Activated CD4-positive, alpha-beta T cell treated with anti-CD3 and anti-CD28 coated beads for 36 hours (primary cell): ENCODE measurements at regions of chr19 and their contacts with region 1.

Region 1: DNA sequence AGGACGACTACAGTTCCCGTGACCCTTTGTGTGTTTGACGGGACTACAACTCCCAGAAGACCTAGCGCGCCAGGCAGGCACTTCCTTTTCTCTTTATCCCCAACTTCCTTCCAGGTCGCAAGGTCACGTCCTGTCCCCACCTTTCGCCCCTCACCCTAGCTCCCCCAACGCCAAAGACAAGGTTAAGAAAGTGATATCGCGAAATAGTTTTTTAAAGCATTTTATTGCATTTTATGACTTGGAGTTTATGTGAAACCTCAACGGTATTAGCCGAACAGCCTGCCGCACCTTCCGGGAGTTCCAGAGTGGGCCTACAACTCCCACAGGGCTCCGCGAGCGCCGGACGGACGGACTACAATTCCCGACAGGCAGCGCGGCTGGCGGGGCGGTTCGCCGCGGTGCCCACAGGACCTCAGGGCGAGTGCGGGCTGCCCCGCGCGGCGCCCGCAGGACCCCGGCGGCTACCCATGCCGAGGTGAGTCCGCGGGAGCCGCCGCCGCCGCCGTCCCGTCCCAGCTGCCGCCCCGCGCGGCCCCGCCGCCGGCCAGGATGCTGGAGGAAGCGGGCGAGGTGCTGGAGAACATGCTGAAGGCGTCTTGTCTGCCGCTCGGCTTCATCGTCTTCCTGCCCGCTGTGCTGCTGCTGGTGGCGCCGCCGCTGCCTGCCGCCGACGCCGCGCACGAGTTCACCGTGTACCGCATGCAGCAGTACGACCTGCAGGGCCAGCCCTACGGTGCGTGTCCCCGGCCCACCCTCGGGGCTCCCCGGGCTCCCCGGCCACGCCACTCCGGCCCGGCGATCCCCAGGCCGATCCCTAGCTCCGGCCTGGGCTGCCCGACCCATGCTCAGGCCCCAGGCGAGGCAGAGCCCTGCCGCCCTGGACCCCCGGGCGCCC is at the start of gene NCLN:
- DNase-seq: peak; percentile 97
- ATAC-seq: peak; percentile 86
- H3K4me3 Mint-ChIP-seq: peak within 1 kb of the TSS; percentile 83
- H3K27ac Mint-ChIP-seq: peak within 1 kb of the TSS; percentile 94
- H3K4me1 Mint-ChIP-seq: peaks cover 56% of the 10 kb centered on the region
- H3K27me3 Mint-ChIP-seq: no peaks in the 10 kb centered on the region
- total RNA-seq, gene NCLN: 55.6 to 58.2 TPM

Region 2: GRCh38 chr19:2820112-2820702 is 365.5 kb before region 1 on chr19:
- CTCF ChIA-PET with region 1: no interaction called
- POLR2A ChIA-PET with region 1: no interaction called
- intact Hi-C with region 1: loop called in 1 of 2 experiments (anchors 1 kb)
- DNase-seq: peak; percentile 31
- ATAC-seq: no peak
- H3K4me3 Mint-ChIP-seq: peak overlapping the region; percentile 78
- H3K27ac Mint-ChIP-seq: peak overlapping the region; percentile 31
- H3K4me1 Mint-ChIP-seq: peaks cover 12% of the 10 kb centered on the region
- H3K27me3 Mint-ChIP-seq: no peaks in the 10 kb centered on the region

Region 3: DNA sequence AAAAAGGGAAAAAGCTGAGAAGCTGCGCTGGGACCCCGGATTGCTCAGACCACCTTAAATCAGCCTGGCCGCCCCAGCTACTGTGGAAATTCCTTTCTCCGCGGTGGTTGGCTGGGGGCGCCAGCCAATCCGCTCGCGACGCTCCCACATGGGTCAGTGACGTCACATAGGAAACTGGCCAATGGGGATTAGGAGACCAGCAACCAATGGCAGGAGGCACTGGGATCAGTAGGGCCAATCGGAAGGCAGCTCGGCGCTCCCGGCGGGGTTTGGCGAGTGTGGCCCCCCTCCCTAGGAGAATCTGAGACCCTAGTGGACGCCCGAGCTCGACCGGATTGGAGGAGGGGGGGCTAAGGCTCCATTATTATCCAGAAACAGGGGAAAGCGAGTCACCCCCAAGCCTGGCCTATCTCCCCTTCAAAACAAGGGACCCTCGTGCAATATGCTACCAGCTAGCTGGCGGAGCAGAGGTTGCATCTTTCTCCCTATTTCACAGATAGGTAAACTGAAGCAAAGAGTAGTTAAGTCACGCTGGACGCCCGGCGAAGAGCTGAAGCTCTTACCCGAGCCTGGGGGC is 150.1 kb before region 1 on chr19:
- CTCF ChIA-PET with region 1: no interaction called
- POLR2A ChIA-PET with region 1: no interaction called
- intact Hi-C with region 1: loop called in 1 of 2 experiments (anchors 1 kb)
- DNase-seq: peak; percentile 97
- ATAC-seq: peak; percentile 94
- H3K4me3 Mint-ChIP-seq: peak overlapping the region; percentile 83
- H3K27ac Mint-ChIP-seq: peak overlapping the region; percentile 96
- H3K4me1 Mint-ChIP-seq: peaks cover 19% of the 10 kb centered on the region
- H3K27me3 Mint-ChIP-seq: no peaks in the 10 kb centered on the region

Region 4: DNA sequence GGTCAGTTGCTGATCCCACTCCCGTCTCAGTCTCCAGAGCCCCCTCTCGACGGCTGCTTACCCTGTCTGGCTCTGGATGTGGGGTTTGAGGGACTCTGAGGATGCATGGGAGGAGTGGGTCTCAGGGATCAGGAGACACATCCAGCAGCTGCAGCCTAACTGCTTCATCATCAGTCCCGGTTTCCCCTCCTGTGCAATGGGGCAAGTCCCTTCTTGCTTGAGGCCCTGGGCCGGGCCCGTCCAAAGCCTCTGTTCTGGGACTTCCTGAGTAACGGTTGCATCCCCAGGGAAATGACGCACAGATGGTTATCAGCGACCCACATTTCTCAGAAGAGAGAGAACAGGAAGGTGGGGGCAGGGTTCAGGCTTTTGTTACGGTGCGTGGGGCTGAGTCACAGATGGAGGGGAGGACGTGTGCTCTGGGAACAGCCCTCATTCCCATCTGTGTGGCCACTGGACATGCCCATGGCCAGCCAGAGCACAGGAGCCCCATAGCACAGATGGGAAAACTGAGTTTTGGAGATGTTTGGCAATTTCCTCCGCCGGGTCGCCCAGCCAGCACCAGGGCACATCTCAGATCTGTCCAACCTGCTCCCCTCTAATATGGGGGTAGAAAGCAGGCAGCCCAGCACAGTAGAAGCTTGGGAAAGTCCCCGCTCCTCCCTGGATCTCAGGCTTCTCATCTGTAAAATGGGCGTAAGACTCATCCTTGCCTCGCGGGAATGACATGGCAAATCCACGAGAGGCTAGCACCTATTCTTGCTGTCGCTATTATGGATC is 30.6 kb before region 1 on chr19:
- CTCF ChIA-PET with region 1: no interaction called
- POLR2A ChIA-PET with region 1: no interaction called
- intact Hi-C with region 1: loop called in 1 of 2 experiments (anchors 1 kb)
- DNase-seq: peak; percentile 92
- ATAC-seq: peak; percentile 95
- H3K4me3 Mint-ChIP-seq: no peak overlapping the region
- H3K27ac Mint-ChIP-seq: no peak overlapping the region
- H3K4me1 Mint-ChIP-seq: peaks cover 4% of the 10 kb centered on the region
- H3K27me3 Mint-ChIP-seq: no peaks in the 10 kb centered on the region

Region 5: DNA sequence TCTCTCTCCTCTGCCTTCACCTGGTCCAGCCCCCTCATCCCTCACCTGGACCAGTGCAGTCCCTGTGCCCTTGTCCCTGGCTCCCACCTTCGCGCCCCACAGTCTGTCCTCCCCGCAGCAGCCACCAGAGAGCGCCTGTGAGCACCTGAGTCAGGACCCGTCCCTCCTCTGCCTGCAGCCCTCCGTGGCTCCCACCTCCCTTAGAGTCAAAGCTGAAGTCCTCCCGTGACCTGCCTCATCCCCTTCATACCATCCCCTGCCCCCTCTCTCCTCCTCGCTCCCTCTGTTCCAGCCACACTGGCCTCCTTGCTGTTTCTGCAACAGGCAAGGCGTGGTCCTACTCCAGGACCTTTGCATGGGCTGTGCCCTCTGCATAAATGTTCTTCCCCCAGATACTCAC is 49.1 kb after region 1 on chr19:
- CTCF ChIA-PET with region 1: no interaction called
- POLR2A ChIA-PET with region 1: no interaction called
- intact Hi-C with region 1: no loop called
- DNase-seq: peak; percentile 63
- ATAC-seq: peak; percentile 42
- H3K4me3 Mint-ChIP-seq: no peak overlapping the region
- H3K27ac Mint-ChIP-seq: no peak overlapping the region
- H3K4me1 Mint-ChIP-seq: no peaks in the 10 kb centered on the region
- H3K27me3 Mint-ChIP-seq: peaks cover 13% of the 10 kb centered on the region

Region 6: DNA sequence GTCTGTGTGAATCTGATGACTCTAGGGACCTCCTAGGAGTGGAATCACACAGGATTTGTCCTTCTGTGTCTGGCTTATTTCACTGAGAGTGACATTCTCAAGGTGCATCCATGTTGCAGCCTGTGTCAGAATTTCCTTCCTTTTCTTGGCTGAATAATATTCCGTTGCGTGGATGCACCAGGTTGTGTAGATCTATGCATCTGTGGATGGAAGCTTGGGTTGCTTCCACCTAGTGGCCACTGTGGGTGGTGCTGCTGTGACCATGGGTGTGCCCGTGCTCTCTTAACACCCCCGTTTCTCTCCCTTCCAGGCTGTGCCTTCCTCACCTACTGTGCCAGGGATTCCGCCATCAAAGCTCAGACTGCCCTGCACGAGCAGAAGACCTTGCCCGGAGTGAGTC is 64.9 kb after region 1 on chr19:
- CTCF ChIA-PET with region 1: no interaction called
- POLR2A ChIA-PET with region 1: no interaction called
- intact Hi-C with region 1: no loop called
- DNase-seq: peak; percentile 69
- ATAC-seq: peak; percentile 83
- H3K4me3 Mint-ChIP-seq: no peak overlapping the region
- H3K27ac Mint-ChIP-seq: no peak overlapping the region
- H3K4me1 Mint-ChIP-seq: no peaks in the 10 kb centered on the region
- H3K27me3 Mint-ChIP-seq: peaks cover 18% of the 10 kb centered on the region

Region 7: GRCh38 chr19:3557461-3558248 is 371.9 kb after region 1 on chr19 and contains the start of gene MFSD12:
- CTCF ChIA-PET with region 1: no interaction called
- POLR2A ChIA-PET with region 1: no interaction called
- intact Hi-C with region 1: loop called in 1 of 2 experiments (anchors 1 kb)
- DNase-seq: peak; percentile 97
- ATAC-seq: peak; percentile 89
- H3K4me3 Mint-ChIP-seq: peak within 1 kb of the TSS; percentile 96
- H3K27ac Mint-ChIP-seq: peak within 1 kb of the TSS; percentile 92
- H3K4me1 Mint-ChIP-seq: peaks cover 36% of the 10 kb centered on the region
- H3K27me3 Mint-ChIP-seq: no peaks in the 10 kb centered on the region
- total RNA-seq, gene MFSD12: 44.7 to 46.7 TPM

Region 8: DNA sequence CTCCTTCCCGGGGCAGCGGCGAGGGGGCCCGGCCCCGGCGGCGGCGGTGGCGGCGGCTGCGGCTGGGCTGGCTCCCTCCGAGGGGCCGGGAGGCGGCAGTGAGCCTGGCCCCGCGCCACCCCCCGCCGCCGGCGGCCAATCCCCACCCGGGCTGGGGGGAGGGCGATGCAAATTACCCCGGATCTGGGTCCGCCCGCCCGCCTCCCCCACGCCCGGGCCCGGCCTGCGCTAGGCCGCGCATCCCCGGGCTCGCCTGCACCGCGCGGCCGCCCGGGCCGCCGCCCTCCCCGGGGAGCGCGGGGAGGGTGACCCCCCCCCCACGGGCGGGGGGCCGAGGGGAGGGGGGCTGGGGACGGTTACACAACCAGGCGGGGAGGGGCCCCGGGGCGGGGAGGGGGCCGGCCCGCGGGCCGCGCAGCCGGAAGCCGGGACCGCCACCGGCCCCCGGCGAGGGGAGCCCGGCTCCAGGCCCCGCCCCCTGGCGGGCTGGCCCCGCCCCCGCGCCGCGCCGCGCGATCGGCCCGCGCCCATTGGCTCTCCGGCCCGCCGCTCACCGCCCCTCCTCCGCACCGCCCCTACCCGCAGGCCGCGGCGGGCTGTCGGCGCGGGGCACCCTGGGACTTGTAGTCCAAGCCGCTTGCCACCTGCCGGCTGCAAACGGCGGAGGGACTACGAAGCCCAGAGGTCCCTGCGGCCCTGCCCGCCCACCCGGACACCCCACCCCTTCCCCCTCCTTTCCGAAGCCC is 879.9 kb after region 1 on chr19:
- CTCF ChIA-PET with region 1: no interaction called
- POLR2A ChIA-PET with region 1: no interaction called
- intact Hi-C with region 1: loop called in 1 of 2 experiments (anchors 1 kb)
- DNase-seq: peak; percentile 99
- ATAC-seq: peak; percentile 84
- H3K4me3 Mint-ChIP-seq: peak overlapping the region; percentile 71
- H3K27ac Mint-ChIP-seq: no peak overlapping the region
- H3K4me1 Mint-ChIP-seq: peaks cover 40% of the 10 kb centered on the region
- H3K27me3 Mint-ChIP-seq: no peaks in the 10 kb centered on the region